ENCODE measurements at regions of chr1 and their contacts with region 1.

Region 1: GRCh38 chr1:203127666-203128430 is at the start of gene ADORA1:
- DNase-seq: no peak
- H3K4me3 Mint-ChIP-seq: peak within 1 kb of the TSS; percentile 71
- H3K27ac Mint-ChIP-seq: no peak within 1 kb of the TSS
- H3K4me1 Mint-ChIP-seq: peaks cover 7% of the 10 kb centered on the region
- H3K27me3 Mint-ChIP-seq: peaks cover 33% of the 10 kb centered on the region
- total RNA-seq, gene ADORA1: not detected in 2 replicates

Region 2: DNA sequence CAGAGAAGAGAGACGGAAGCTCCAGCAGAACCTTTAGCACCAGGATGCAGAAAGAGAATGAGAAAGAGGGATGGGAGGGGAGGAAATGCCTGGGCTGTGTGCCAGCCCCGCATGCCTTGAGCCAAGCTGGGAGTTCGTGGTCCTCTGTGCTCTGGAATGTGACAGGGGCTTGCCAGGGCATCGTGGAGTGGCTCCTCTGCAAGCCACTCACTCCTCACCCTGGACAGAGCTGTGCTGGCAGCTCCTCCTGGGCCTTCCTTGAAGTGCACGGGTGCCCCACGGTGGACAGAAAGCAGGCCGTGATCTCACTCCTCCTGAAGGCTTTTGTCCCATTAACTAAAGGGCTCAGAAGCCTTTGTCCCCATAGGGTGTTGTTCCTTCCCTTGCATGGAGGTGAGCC is 312.9 kb after region 1 on chr1:
- intact Hi-C with region 1: loop called (anchors 10 kb)
- DNase-seq: no peak
- H3K4me3 Mint-ChIP-seq: no peak overlapping the region
- H3K27ac Mint-ChIP-seq: no peak overlapping the region
- H3K4me1 Mint-ChIP-seq: no peaks in the 10 kb centered on the region
- H3K27me3 Mint-ChIP-seq: peaks cover 14% of the 10 kb centered on the region

Measured in activated T-helper 1 cell treated with anti-CD3 and anti-CD28 coated beads, Interleukin-12 subunit alpha, Interleukin-12 subunit beta, Interleukin-2, Interleukin-4 antibody, amounts not matched to agents 30 ng/mL and 10 ng/mL and 1 ng/mL, durations not matched to agents 14 hours and 24 hours and 36 hours (primary cell).